B cell (primary cell): ENCODE measurements at regions of chr13 and their contacts with region 1.

Region 1: GRCh38 chr13:51645154-51645650 is 60.9 kb downstream of the WDFY2 start:
- DNase-seq: peak; percentile 79
- ATAC-seq: peak; percentile 79
- H3K4me3 ChIP-seq: peak overlapping the region in 2 of 5 experiments; percentile 16 to 42
- H3K4me3 Mint-ChIP-seq: peak overlapping the region; percentile 70
- H3K27ac ChIP-seq: peak overlapping the region; percentile 83 to 91
- H3K27ac Mint-ChIP-seq: peak overlapping the region; percentile 88
- H3K4me1 ChIP-seq: peaks cover 39 to 42% of the 10 kb centered on the region in 2 donors
- H3K4me1 Mint-ChIP-seq: peaks cover 60% of the 10 kb centered on the region
- H3K27me3 ChIP-seq: no peaks in the 10 kb centered on the region
- H3K27me3 Mint-ChIP-seq: no peaks in the 10 kb centered on the region
- CTCF ChIP-seq: no peak

Region 2: GRCh38 chr13:51608857-51609406 is 36.3 kb before region 1 on chr13:
- CTCF ChIA-PET with region 1: no interaction called
- POLR2A ChIA-PET with region 1: no interaction called
- intact Hi-C with region 1: loop called (anchors 2 kb)
- DNase-seq: peak; percentile 61
- ATAC-seq: peak; percentile 80
- H3K4me3 ChIP-seq: peak overlapping the region in 1 of 5 experiments; percentile 6
- H3K4me3 Mint-ChIP-seq: peak overlapping the region; percentile 71
- H3K27ac ChIP-seq: peak overlapping the region; percentile 22 to 43
- H3K27ac Mint-ChIP-seq: peak overlapping the region; percentile 78
- H3K4me1 ChIP-seq: peaks cover 50 to 56% of the 10 kb centered on the region in 2 donors
- H3K4me1 Mint-ChIP-seq: peaks cover 69% of the 10 kb centered on the region
- H3K27me3 ChIP-seq: no peaks in the 10 kb centered on the region
- H3K27me3 Mint-ChIP-seq: no peaks in the 10 kb centered on the region
- CTCF ChIP-seq: no peak

Region 3: DNA sequence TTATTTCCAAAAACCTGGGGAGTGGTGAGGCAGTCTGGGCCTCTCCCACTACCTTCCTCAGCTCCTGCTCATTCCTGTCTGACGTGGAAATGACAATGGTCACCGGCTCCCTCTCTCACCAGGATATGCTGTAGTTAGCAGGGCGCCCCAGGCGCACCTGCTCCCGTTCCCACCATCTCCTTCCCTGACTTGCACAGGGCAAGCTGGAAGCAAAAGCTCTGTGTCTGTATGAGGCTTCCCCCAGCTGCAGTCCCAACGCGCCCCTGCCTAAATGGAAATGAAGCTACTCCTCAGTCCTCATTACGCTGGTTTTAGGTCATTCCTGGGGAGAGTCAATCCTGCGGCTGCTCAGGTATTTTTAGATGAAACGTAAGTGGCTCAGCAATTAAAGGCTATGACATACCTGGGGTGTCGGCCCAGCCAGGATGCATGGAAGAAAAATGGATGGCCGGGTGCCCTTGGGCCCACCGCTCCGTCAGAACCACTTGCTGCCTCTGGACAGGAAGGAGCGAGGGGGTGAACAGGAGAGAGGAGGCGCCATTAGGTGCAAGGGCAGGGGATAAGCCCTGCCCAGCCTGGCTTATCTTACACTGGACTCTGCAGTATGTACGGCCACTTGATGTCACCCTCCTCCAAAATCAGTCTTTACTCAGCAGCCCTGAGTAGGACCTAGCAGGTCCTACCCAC is 126.4 kb after region 1 on chr13:
- CTCF ChIA-PET with region 1: no interaction called
- POLR2A ChIA-PET with region 1: no interaction called
- intact Hi-C with region 1: no loop called
- DNase-seq: no peak
- ATAC-seq: no peak
- H3K4me3 ChIP-seq: no peak overlapping the region
- H3K4me3 Mint-ChIP-seq: no peak overlapping the region
- H3K27ac ChIP-seq: no peak overlapping the region
- H3K27ac Mint-ChIP-seq: no peak overlapping the region
- H3K4me1 ChIP-seq: peaks cover 0 to 9% of the 10 kb centered on the region in 2 donors
- H3K4me1 Mint-ChIP-seq: peaks cover 8% of the 10 kb centered on the region
- H3K27me3 ChIP-seq: no peaks in the 10 kb centered on the region
- H3K27me3 Mint-ChIP-seq: no peaks in the 10 kb centered on the region
- CTCF ChIP-seq: no peak

Region 4: GRCh38 chr13:51906581-51906980 is 261.4 kb after region 1 on chr13:
- CTCF ChIA-PET with region 1: no interaction called
- POLR2A ChIA-PET with region 1: no interaction called
- intact Hi-C with region 1: no loop called
- DNase-seq: no peak
- ATAC-seq: no peak
- H3K4me3 ChIP-seq: no peak overlapping the region
- H3K4me3 Mint-ChIP-seq: no peak overlapping the region
- H3K27ac ChIP-seq: no peak overlapping the region
- H3K27ac Mint-ChIP-seq: no peak overlapping the region
- H3K4me1 ChIP-seq: no peaks in the 10 kb centered on the region
- H3K4me1 Mint-ChIP-seq: peaks cover 5% of the 10 kb centered on the region
- H3K27me3 ChIP-seq: no peaks in the 10 kb centered on the region
- H3K27me3 Mint-ChIP-seq: peaks cover 3% of the 10 kb centered on the region
- CTCF ChIP-seq: no peak